Right cardiac atrium (tissue), 5 donors: ENCODE measurements at regions of chr10 and their contacts with region 1.

Region 1: DNA sequence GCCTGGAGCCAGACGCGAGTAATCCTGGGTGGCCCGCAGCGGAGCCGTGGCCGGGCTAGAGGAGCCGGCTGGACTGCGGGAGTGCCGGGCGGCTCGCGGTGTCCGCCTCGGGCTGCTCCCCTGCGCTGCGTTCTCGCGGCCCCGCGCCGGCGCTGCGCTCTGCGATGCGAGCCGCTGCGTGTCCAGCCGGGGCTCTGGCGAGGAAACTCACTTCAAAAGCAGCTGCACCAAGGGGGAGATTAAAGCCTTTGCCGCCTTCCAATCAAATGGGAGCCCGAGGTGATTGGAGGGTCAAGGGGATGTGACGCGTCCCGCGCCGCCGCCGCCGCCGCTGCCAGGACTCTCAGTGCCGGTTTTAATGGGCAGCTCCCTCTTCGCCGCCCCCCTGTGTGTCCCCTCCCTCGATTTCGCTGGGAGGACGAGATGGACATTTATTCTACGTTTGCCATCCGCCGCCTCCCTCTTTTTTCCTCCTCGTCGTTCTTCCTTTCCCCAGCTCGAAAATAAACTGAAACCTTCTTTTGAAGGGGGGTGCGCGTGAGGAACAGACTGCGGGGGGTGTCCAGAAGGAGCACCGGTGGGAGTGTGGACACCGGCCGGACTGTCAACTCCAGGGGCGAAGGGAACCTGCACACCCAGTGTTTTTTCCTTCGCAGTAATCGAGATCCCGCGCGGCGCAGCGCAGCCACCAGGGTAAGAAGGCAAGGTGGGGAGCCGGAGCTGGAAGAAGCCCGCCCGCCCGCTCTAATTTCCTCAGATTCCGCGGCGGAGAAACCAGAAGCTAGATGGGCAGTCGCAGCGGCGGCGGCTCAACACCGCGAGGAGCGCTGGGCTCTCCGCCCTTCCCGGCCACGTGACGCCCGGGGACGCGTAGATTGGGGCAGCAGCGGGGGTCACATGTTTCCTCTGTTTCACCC is at the start of gene ZNF503:
- DNase-seq: peak; percentile 98 to 99 (median 99)
- ATAC-seq: peak; percentile 87 to 89
- H3K4me3 ChIP-seq: peak within 1 kb of the TSS; percentile 82
- H3K27ac ChIP-seq: peak within 1 kb of the TSS; percentile 89
- H3K4me1 ChIP-seq: no peaks in the 10 kb centered on the region
- H3K27me3 ChIP-seq: no peaks in the 10 kb centered on the region
- total RNA-seq, gene ZNF503: 13.2 to 14.6 (median 14.3) TPM

Region 2: DNA sequence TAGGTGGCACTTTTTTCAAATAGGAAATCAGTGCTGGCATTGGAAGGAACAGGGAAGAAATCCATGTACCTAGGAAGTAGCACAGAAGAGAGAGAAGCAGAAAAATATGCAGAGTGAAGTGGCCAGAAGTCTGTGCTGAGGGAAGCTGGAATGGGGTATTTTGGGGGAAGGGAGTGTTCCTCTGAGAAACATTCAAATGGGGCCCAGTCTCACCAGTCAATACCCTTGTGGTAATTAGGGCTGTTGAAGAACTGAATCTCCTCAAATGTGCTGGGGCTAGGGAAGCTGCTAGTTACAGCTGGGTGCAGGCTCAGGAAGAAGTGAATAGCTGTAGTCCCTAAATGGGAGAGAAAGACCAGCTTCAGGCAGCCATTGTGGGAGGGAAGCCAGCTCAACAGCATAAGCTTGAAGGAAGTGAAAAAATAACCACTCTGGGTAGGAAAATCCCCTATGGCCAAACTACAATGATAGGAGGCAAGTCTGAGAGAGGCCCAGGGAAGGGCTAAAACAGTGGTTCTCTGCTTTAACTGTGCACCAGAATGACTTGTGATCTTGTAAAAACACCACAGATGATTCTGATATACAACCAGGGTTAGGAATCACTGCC is 1598.0 kb before region 1 on chr10:
- intact Hi-C with region 1: no loop called
- DNase-seq: peak in 1 of 3 donors; percentile 28
- ATAC-seq: no peak
- H3K4me3 ChIP-seq: no peak overlapping the region
- H3K27ac ChIP-seq: no peak overlapping the region
- H3K4me1 ChIP-seq: peaks cover 4% of the 10 kb centered on the region
- H3K27me3 ChIP-seq: no peaks in the 10 kb centered on the region

Region 3: GRCh38 chr10:75612904-75613684 is 211.3 kb after region 1 on chr10:
- intact Hi-C with region 1: loop called in 1 of 4 experiments (anchors 10 kb)
- DNase-seq: no peak
- ATAC-seq: peak; percentile 72 to 73
- H3K4me3 ChIP-seq: no peak overlapping the region
- H3K27ac ChIP-seq: no peak overlapping the region
- H3K4me1 ChIP-seq: peaks cover 5% of the 10 kb centered on the region
- H3K27me3 ChIP-seq: no peaks in the 10 kb centered on the region

Region 4: DNA sequence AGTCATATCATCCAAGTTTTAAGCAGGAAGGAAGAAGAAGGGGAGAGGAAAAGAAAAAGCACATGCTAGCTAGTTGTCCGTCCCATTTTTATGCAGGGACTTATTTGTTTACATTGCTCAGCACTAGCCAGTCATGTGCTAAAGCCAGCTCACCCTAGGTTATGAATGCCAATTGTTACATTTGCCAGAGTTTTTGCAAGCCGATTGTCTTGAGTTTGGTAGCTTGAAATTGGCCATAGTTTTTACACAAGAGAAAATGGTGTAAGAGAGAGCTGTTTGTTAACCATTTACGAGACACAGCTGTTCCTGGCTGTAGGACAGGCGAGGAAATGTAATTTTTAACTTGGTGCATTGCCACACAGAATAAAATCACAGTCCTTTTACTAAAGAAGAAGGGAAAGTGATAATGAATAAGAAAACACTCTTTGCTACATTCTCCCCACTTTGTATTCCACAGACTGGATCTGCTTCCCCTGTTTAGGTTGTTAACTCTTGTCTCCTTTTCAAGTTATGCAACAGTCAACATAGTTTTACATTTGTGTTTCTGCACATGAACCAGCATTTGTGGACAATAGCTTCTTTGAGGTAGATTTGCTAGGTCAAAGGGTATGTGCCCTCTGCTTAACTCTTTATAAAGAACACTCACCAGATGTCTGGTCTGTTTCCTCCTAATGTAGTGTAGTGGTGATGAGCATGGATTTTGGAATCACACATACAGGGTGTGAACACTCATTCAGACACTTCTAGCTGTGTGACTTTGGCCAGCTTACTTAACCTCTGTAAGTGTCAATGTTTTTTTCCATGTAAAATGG is 386.8 kb after region 1 on chr10:
- intact Hi-C with region 1: loop called in 1 of 4 experiments (anchors 10 kb)
- DNase-seq: no peak
- ATAC-seq: peak; percentile 66 to 82
- H3K4me3 ChIP-seq: no peak overlapping the region
- H3K27ac ChIP-seq: no peak overlapping the region
- H3K4me1 ChIP-seq: peaks cover 2% of the 10 kb centered on the region
- H3K27me3 ChIP-seq: no peaks in the 10 kb centered on the region

Region 5: DNA sequence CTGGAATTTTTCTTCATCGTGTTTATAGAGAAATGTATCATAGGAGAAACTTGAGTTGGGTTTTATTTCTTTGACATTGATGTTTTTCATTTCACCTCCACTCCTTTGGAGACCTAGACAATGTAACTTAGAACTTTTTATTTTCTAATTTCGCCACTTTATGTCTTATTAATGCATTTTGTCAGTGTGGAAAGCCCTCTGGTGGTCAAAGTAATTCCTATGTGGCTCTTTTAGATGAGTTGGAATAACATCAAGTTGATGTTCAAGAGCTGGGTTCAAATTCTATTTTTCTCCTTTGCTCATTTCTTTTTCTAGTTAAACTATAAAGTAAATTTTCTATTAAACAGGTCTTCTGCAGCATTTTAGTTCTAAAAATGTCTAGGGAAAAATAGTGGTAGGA is 508.2 kb after region 1 on chr10:
- intact Hi-C with region 1: loop called (anchors 2 to 10 kb)
- DNase-seq: no peak
- ATAC-seq: no peak
- H3K4me3 ChIP-seq: no peak overlapping the region
- H3K27ac ChIP-seq: no peak overlapping the region
- H3K4me1 ChIP-seq: no peaks in the 10 kb centered on the region
- H3K27me3 ChIP-seq: no peaks in the 10 kb centered on the region

Region 6: GRCh38 chr10:76303682-76304316 is 902.0 kb after region 1 on chr10:
- intact Hi-C with region 1: loop called in 1 of 4 experiments (anchors 10 kb)
- DNase-seq: peak; percentile 77 to 89 (median 84)
- ATAC-seq: peak; percentile 95 to 97
- H3K4me3 ChIP-seq: no peak overlapping the region
- H3K27ac ChIP-seq: peak overlapping the region; percentile 66
- H3K4me1 ChIP-seq: peaks cover 2% of the 10 kb centered on the region
- H3K27me3 ChIP-seq: no peaks in the 10 kb centered on the region

Region 7: GRCh38 chr10:76558586-76558985 is 1156.8 kb after region 1 on chr10:
- intact Hi-C with region 1: loop called in 1 of 4 experiments (anchors 10 kb)
- DNase-seq: peak in 1 of 3 donors; percentile 32
- ATAC-seq: peak in 1 of 2 donors; percentile 37
- H3K4me3 ChIP-seq: no peak overlapping the region
- H3K27ac ChIP-seq: peak overlapping the region; percentile 31
- H3K4me1 ChIP-seq: peaks cover 6% of the 10 kb centered on the region
- H3K27me3 ChIP-seq: no peaks in the 10 kb centered on the region